Heart right ventricle (tissue), 16 donors: ENCODE measurements at regions of chr16 and their contacts with region 1.

Region 1: GRCh38 chr16:77437859-77438258 is 3.0 kb upstream of the ADAMTS18 start:
- DNase-seq: no peak
- ATAC-seq: no peak
- H3K4me3 ChIP-seq: no peak overlapping the region
- H3K27ac ChIP-seq: no peak overlapping the region
- H3K4me1 ChIP-seq: peaks cover 0 to 8% (median 0%) of the 10 kb centered on the region in 9 donors
- H3K27me3 ChIP-seq: peaks cover 0 to 51% (median 43%) of the 10 kb centered on the region in 7 donors
- CTCF ChIP-seq: peak in 6 of 9 donors; percentile 23 to 47 (median 32)

Region 2: DNA sequence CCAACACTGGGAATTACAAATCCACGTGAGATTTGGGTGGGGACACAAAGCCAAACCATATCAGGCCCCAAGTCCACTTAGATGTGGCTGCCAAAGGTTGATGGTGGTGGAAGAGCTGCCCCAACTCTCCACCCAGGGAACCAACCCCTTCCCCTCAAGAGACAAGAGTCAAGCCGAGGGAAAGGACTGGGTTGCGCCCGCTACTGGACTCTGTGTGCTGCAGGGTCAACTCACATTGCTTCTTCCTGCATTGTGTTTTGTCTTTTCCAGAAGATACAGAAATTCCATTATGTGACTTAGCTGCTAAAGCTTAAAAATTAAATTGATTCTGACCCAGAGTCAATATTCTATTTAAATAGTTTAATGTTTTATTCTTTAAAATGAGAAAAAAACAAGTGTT is 61.5 kb before region 1 on chr16:
- intact Hi-C with region 1: loop called in 1 of 10 experiments (anchors 10 kb)
- DNase-seq: no peak
- ATAC-seq: no peak
- H3K4me3 ChIP-seq: no peak overlapping the region
- H3K27ac ChIP-seq: no peak overlapping the region
- H3K4me1 ChIP-seq: peaks cover 0 to 4% (median 0%) of the 10 kb centered on the region in 9 donors
- H3K27me3 ChIP-seq: peaks cover 0 to 3% (median 0%) of the 10 kb centered on the region in 7 donors
- CTCF ChIP-seq: peak in 1 of 9 donors; percentile 14

Region 3: GRCh38 chr16:77468831-77469230 is 31.0 kb after region 1 on chr16:
- intact Hi-C with region 1: loop called in 1 of 10 experiments (anchors 2 kb)
- DNase-seq: peak in 1 of 2 donors; percentile 4
- ATAC-seq: peak in 3 of 8 donors; percentile 20 to 69 (median 29)
- H3K4me3 ChIP-seq: no peak overlapping the region
- H3K27ac ChIP-seq: no peak overlapping the region
- H3K4me1 ChIP-seq: peaks cover 0 to 18% (median 0%) of the 10 kb centered on the region in 9 donors
- H3K27me3 ChIP-seq: peaks cover 0 to 7% (median 0%) of the 10 kb centered on the region in 7 donors
- CTCF ChIP-seq: no peak

Region 4: GRCh38 chr16:77584205-77584859 is 146.5 kb after region 1 on chr16:
- intact Hi-C with region 1: loop called in 5 of 10 experiments (anchors 2 to 10 kb)
- DNase-seq: peak in 1 of 2 donors; percentile 35
- ATAC-seq: peak in 6 of 8 donors; percentile 45 to 71 (median 52)
- H3K4me3 ChIP-seq: no peak overlapping the region
- H3K27ac ChIP-seq: peak overlapping the region in 2 of 10 donors; percentile 4 to 6
- H3K4me1 ChIP-seq: peaks cover 0 to 30% (median 3%) of the 10 kb centered on the region in 9 donors
- H3K27me3 ChIP-seq: peaks cover 0 to 33% (median 6%) of the 10 kb centered on the region in 7 donors
- CTCF ChIP-seq: peak; percentile 80 to 92 (median 89)

Region 5: GRCh38 chr16:77775911-77776909 is 338.4 kb after region 1 on chr16:
- intact Hi-C with region 1: no loop called
- DNase-seq: no peak
- ATAC-seq: no peak
- H3K4me3 ChIP-seq: no peak overlapping the region
- H3K27ac ChIP-seq: no peak overlapping the region
- H3K4me1 ChIP-seq: no peaks in the 10 kb centered on the region
- H3K27me3 ChIP-seq: no peaks in the 10 kb centered on the region
- CTCF ChIP-seq: no peak